ENCODE measurements at regions of chr15 and their contacts with region 1.

Region 1: GRCh38 chr15:78241007-78241406 is 6.6 kb upstream of the ACSBG1 start:
- ATAC-seq: peak; percentile 68 to 99 (median 94)
- H3K4me3 ChIP-seq: no peak overlapping the region
- H3K27ac ChIP-seq: no peak overlapping the region
- H3K4me1 ChIP-seq: peaks cover 7 to 12% of the 10 kb centered on the region in 2 donors

Region 2: GRCh38 chr15:77959432-77959879 is 281.6 kb before region 1 on chr15:
- in situ Hi-C with region 1: loop called (anchors 25 kb)
- ATAC-seq: peak; percentile 97 to 100 (median 98)
- H3K4me3 ChIP-seq: no peak overlapping the region
- H3K27ac ChIP-seq: no peak overlapping the region
- H3K4me1 ChIP-seq: no peaks in the 10 kb centered on the region

Region 3: GRCh38 chr15:78108299-78109084 is 132.5 kb before region 1 on chr15:
- in situ Hi-C with region 1: loop called in 3 of 9 experiments (anchors 25 kb)
- ATAC-seq: peak; percentile 71 to 95 (median 90)
- H3K4me3 ChIP-seq: no peak overlapping the region
- H3K27ac ChIP-seq: no peak overlapping the region
- H3K4me1 ChIP-seq: peaks cover 0 to under 1% of the 10 kb centered on the region in 2 donors

Region 4: GRCh38 chr15:78131295-78132061 is 109.5 kb before region 1 on chr15 and contains the start of gene CIB2:
- in situ Hi-C with region 1: loop called in 1 of 9 experiments (anchors 10 kb)
- ATAC-seq: peak; percentile 91 to 94 (median 92)
- H3K4me3 ChIP-seq: peak within 1 kb of the TSS; percentile 41 to 78 (median 54)
- H3K27ac ChIP-seq: peak within 1 kb of the TSS; percentile 51 to 74
- H3K4me1 ChIP-seq: peaks cover 7 to 10% of the 10 kb centered on the region in 2 donors
- total RNA-seq, gene CIB2: 0.56 to 27.4 (median 19.9) TPM